ENCODE measurements at regions of chr12 and their contacts with region 1.

Region 1: DNA sequence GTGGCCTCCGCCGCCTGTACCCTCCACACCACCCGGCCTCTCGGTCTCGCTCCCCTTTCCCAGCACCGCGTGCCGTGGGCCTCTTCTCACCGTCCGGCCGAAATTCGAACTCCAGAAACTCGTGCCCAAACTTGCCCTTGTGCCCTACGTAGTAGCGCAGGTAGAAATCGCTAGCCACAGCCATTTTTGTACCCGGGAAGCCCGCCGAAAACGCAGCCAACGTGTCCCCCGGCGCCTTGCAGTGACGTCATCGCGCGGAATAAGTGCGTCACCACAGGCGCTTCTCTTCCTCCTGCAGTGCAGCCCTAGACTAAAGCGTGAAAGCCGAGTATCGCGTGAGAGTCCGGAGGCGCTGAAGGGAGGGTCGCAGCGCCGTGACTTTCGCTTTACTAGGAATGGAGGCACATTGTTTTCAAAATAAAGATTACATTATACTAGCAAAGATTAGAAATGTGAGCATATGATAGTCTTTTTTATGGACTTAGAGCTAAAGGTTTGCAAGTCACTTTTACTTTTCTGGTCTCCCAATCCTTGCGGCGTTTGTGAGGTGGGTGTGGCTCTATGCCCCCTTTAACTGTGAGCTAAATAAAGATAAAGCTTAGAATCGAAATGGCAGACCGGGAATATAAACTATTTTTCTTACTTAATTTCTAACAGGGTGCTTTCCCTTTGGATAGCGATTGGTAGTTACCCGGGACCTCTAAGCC is at the start of gene MAGOHB:
- DNase-seq: peak; percentile 97
- H3K4me3 ChIP-seq: peak within 1 kb of the TSS; percentile 71 to 78
- H3K27ac ChIP-seq: peak within 1 kb of the TSS; percentile 80 to 83
- H3K4me1 ChIP-seq: peaks cover 7% of the 10 kb centered on the region
- H3K27me3 ChIP-seq: no peaks in the 10 kb centered on the region
- CTCF ChIP-seq: peak in 2 of 3 experiments; percentile 13 to 25
- POLR2A ChIP-seq: peak; percentile 25
- total RNA-seq, gene MAGOHB: 16.1 to 16.7 TPM

Region 2: DNA sequence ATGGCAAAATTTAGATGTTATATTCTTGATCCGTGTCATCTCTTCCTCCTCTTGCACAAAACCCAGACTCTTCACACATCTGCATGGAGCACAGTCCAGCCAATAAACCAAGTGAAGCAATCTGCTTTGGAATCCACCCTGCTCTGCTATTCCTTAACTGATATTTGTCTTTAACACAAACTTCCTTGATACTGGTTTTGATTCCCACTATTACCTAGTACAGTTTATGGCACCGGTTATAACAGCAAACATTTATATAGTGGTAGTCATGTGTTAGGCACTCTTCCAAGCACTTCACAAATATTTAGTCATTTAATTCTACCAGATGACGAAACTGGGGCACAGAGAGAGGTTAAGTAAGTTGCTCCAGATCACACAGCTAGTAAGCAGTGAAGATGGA is 47.8 kb after region 1 on chr12:
- intact Hi-C with region 1: no loop called
- DNase-seq: no peak
- H3K4me3 ChIP-seq: no peak overlapping the region
- H3K27ac ChIP-seq: no peak overlapping the region
- H3K4me1 ChIP-seq: no peaks in the 10 kb centered on the region
- H3K27me3 ChIP-seq: no peaks in the 10 kb centered on the region
- CTCF ChIP-seq: no peak
- POLR2A ChIP-seq: no peak

Region 3: DNA sequence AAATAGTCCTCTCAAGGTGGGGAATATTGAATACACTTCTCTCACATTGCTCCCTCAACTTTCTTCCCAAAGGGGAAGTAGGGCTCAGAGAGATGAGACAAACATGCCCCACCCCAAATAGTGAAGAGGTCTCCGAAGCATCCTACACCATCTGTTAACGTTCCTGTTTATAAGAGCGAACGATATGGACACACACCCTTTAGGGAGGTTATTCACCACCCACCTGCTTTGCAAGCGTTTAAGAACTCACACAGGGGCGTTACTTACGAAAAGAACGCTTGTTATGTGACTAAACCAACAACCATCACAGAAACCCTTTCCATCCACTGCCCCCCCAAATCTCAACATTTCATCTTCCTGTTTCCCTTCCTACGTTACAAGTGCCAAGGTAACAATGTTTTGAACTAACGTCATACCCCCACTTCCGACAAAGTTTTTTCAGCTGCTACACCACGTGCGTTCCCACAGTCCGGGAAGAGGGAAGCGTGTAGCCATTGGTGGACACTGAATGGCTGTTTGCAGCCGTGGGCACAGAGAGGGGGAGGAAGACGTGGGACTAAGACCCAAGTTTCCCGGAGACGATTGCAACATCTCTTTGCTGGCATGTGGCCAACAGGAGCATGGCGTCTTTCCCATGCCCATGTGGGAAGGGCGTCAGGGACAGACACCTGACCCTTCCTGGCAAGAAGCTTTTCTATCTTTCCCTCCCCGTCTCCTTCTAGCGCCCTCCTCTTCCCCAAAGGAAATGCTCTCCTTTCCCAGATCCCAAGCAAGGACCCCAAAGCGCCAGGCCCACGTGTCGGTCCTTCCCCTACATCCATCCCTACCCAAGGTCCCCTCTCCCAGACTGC is 108.4 kb after region 1 on chr12:
- intact Hi-C with region 1: loop called (anchors 10 kb)
- DNase-seq: peak; percentile 95
- H3K4me3 ChIP-seq: peak overlapping the region; percentile 83 to 84
- H3K27ac ChIP-seq: peak overlapping the region; percentile 94 to 98
- H3K4me1 ChIP-seq: peaks cover 36% of the 10 kb centered on the region
- H3K27me3 ChIP-seq: no peaks in the 10 kb centered on the region
- CTCF ChIP-seq: no peak
- POLR2A ChIP-seq: no peak

Measured in testis (tissue), 5 donors.